ENCODE measurements at regions of chr19 and their contacts with region 1.

Region 1: DNA sequence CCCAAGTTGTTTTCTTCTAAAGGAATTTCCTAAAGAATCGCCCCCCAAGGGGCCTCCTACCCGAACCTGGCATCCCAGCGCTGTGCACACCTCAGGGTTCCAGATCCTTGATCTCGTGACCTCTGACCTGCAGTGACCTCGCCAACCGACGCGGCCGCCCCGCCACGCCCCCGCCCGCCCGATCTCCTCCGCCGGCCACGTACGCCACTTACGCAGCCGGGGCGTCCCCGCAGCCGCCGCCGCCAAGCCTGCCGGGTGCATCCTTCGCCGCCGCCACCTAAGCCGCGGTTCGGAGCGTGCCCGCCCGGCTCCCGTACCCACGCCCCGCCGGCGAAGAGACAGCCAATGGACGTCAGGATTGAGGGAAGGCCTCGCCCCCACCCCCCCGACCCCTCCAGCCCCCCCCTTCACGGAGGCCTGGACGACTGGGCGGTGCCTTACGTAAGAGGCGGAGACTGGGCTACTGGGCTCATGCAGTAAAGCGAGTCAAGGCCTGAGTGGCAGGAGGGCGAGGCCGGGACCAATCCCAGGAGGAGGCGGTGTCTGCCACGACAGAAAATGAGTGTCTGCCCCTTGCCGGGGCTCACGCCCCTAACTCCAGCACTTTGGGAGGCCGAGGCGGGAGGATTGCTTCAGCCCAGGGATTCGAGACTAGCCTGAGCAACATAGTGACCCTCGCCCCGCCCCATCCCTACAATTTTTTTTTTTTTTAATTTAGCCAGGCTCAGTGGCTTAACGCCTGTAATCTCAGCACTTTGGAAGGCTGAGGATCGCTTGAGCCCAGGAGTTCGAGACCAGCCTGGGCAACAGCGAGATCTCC is at the start of gene YIF1B:
- DNase-seq: peak; percentile 98
- ATAC-seq: peak; percentile 96
- total RNA-seq, gene YIF1B: 34.7 TPM

Region 2: DNA sequence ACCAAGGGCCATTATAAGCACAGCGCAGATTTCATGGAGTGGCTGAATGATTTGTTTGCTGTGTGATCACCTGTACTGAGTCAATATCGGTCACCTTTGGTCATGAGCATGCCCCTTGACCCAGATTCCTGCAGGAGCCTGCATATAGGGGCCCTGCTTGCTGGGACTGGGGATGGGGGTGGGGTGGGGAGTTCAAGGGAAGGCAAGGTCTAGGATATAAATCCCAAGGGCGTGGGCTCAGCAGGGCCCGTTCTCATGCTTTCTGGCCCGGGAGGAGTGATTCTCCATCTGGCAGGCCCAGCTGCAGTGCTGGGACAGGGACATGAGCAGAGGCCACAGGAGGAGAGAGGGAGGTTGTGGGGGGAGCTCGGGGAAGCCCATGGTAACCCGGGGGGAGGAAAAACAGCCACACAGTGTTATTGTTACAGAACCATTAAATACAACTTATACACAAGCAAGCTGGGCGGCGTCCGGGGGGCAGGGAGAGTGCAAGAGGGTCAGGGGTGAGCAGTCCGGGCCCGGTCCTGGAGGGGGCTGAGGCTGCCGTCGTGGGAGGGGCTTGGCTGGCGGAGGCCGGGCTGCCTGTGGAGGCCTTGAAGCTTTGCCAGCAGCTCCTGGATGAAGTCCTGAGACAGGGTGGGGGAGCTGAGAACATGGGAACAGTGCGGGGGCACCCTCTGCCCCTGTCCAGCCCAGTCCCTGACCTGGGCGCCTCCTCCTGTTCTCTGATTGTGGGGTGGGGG is 64.9 kb before region 1 on chr19:
- intact Hi-C with region 1: loop called (anchors 5 kb)
- DNase-seq: peak; percentile 89
- ATAC-seq: peak; percentile 64

Region 3: GRCh38 chr19:38277969-38278680 is 37.7 kb before region 1 on chr19:
- intact Hi-C with region 1: loop called (anchors 5 kb)
- DNase-seq: no peak
- ATAC-seq: peak; percentile 82

Region 4: DNA sequence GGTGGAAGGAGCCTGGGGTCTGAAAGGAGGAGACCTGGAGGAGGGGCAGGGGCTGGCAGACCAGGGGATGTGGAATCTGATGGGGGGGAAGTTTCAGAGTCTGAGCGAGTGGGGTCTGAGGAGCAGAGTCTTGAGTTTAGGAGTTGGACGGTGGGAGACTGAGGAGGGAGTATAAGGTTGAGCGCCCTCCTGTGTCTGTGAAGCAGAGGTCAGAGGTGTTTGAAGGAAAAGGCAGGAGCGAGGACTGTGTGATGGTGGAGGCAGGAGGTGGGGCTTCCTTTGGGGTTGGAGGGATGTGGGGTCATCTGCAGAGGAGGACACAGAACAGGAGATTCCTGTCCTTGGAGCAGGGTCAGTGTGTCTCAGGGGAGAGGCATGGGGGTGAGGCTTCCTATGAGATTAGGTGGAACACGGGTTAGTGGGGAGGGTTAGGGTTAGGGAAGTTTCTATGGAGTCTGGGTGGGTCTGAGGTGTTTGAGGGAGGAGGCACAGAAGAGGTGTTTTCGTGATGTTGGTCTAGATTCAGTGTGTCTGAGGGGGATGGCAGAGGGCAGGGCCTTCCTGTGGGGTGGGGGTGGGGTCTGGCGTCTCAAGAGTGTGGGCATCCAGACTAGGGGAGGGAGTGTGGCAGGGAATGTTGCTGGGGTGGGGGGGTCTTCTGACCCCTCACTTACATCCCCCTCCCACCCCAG is 125.9 kb after region 1 on chr19:
- intact Hi-C with region 1: no loop called
- DNase-seq: no peak
- ATAC-seq: no peak